Panc1 (cell line): ENCODE measurements at regions of chr2 and their contacts with region 1.

Region 1: DNA sequence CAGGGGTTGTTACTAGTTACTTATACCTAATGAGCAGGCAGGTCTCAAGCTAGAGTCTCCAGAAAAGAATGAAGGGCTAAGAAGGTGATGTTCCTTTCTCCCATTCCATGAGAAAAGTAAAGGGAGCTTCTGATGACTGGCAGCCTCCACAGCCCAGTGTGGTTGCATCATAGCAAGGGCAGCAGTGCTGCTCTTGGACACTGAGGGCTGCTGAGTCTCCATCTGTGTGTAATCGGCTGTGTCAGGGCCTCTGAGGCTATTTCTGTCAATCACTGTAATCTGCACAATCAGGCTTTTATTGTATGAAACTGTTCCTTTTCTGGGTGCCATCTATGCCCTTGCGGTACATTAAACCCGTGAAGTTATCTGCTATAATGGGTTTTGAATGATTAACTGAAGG is 164.1 kb upstream of the FBXO11 start:
- DNase-seq: no peak
- ATAC-seq: no peak
- H3K4me3 ChIP-seq: no peak overlapping the region
- H3K27ac ChIP-seq: no peak overlapping the region
- H3K4me1 ChIP-seq: no peaks in the 10 kb centered on the region
- H3K27me3 ChIP-seq: no peaks in the 10 kb centered on the region; the same call in 1 of the 2 replicates
- CTCF ChIP-seq: no peak

Region 2: DNA sequence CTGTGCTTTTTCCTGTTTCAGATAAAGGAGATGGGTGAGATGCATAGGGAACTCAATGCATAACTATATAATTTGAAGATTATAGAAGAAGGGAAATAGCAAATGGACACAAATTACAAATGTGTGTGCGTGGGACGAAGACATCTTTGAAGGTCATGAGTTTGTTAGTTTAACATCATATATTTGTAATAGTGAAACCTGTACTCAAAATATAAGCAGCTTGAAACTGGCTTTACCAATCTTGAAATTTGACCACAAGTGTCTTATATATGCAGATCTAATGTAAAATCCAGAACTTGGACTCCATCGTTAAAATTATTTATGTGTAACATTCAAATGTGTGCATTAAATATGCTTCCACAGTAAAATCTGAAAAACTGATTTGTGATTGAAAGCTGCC is 683.9 kb before region 1 on chr2:
- CTCF ChIA-PET with region 1: no interaction called
- POLR2A ChIA-PET with region 1: no interaction called
- in situ Hi-C with region 1: no loop called
- intact Hi-C with region 1: no loop called
- DNase-seq: no peak
- ATAC-seq: no peak
- H3K4me3 ChIP-seq: no peak overlapping the region
- H3K27ac ChIP-seq: no peak overlapping the region
- H3K4me1 ChIP-seq: no peaks in the 10 kb centered on the region
- H3K27me3 ChIP-seq: no peaks in the 10 kb centered on the region
- CTCF ChIP-seq: no peak

Region 3: DNA sequence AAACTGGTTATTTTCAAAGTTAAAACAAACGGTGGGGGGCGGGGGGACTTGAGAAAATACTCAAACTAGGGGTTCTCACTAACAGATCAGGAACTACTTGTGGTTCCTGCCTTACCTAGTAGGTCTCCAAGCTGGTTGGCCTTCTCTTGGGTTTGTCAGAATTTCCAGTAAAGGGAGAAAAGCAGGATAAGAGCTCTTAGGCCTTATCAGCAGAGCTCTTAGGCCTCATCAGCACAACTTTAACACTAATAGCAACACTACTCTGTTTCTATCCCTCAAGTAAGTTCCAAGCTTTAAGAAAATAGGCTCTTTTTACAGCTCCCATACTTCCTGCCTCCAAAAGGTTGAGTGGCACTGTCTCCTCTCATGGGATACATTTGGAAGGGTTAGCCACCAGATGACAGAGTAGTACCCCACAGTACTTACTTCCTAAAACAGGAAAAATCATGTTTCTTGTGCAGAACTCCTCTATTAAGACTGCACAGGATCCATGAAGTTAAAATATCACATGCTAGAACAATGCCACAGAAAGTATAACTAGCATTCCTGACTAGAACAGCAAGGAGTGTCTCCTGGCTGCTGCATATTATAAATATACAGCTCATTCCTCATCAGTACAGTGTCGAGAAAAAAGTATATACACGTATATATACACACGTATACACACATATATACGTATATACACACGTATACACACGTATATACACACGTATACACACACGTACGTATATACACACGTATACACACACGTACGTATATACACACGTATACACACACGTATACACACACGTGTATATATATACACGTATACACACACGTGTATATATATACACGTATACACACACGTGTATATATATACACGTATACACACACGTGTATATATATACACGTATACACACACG is 170.2 kb before region 1 on chr2:
- CTCF ChIA-PET with region 1: no interaction called
- POLR2A ChIA-PET with region 1: interaction called, 11 read pairs
- in situ Hi-C with region 1: no loop called
- intact Hi-C with region 1: no loop called
- DNase-seq: no peak
- ATAC-seq: no peak
- H3K4me3 ChIP-seq: no peak overlapping the region
- H3K27ac ChIP-seq: no peak overlapping the region
- H3K4me1 ChIP-seq: peaks cover 17% of the 10 kb centered on the region
- H3K27me3 ChIP-seq: no peaks in the 10 kb centered on the region
- CTCF ChIP-seq: no peak

Region 4: DNA sequence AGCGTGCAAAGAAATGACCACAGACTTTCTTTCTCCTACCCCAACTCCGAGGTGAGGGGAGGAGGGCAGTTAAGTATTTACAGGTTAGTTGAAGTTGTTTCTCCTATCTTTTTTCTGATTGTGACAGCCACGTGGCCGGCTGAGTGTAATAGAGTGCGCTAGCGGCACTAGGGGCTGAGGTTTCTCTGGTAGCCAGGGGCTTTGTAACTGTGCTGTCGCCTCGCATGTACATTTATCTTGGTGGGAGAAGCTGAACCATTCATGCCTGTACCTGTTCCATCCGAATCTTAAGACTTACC is 245.4 kb after region 1 on chr2:
- CTCF ChIA-PET with region 1: no interaction called
- POLR2A ChIA-PET with region 1: no interaction called
- in situ Hi-C with region 1: no loop called
- intact Hi-C with region 1: no loop called
- DNase-seq: no peak
- ATAC-seq: no peak
- H3K4me3 ChIP-seq: peak overlapping the region; percentile 87 to 91
- H3K27ac ChIP-seq: peak overlapping the region; percentile 85
- H3K4me1 ChIP-seq: peaks cover 23% of the 10 kb centered on the region; the same call in 1 of the 2 replicates
- H3K27me3 ChIP-seq: no peaks in the 10 kb centered on the region
- CTCF ChIP-seq: no peak